ENCODE measurements at regions of chr1 and their contacts with region 1.

Region 1: GRCh38 chr1:47710329-47711071 is 272.7 kb downstream of the FOXD2 start:
- DNase-seq: peak; percentile 49 to 78
- H3K4me3 ChIP-seq: peak overlapping the region; percentile 32; the same call in 1 of the 2 replicates
- H3K27ac ChIP-seq: no peak overlapping the region
- H3K4me1 ChIP-seq: no peaks in the 10 kb centered on the region; the same call in 1 of the 2 replicates
- H3K27me3 ChIP-seq: peaks cover 33% of the 10 kb centered on the region
- CTCF ChIP-seq: peak; percentile 96

Region 2: GRCh38 chr1:47388891-47389238 is 321.6 kb before region 1 on chr1:
- CTCF ChIA-PET with region 1: interaction called, 3 read pairs
- POLR2A ChIA-PET with region 1: no interaction called
- intact Hi-C with region 1: loop called (anchors 1 kb)
- DNase-seq: peak; percentile 44 to 70
- H3K4me3 ChIP-seq: no peak overlapping the region
- H3K27ac ChIP-seq: no peak overlapping the region
- H3K4me1 ChIP-seq: peaks cover 9% of the 10 kb centered on the region; the same call in 1 of the 2 replicates
- H3K27me3 ChIP-seq: no peaks in the 10 kb centered on the region
- CTCF ChIP-seq: peak; percentile 88

Region 3: DNA sequence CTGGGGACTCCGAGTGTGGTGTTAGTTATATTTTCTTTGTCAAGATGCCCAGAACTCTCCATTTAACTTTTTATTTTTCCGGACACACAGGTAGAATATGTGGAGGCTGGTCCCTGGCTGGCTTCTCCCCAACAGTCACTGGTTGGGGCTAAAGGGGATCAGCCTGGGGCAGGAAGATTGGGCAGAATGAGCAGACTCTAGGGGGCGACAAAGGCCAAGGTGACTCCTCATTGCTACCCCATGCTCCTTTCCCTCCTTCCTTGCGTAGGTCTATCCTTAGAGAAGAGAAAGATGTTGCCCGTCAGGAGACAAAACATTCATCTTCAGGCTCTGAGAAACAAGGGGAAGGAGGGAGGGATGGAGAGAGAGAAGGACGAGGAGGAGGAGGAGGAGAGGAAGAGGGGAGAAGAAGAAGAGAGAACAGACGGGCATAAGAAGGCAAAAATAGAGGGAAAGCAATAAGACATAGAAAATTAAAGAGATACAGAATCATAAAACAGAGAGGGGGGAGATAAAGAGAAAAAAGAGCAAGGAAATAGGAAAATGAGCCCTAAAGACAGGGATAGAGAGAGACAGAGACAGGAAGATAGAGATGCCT is 182.7 kb before region 1 on chr1:
- CTCF ChIA-PET with region 1: no interaction called
- POLR2A ChIA-PET with region 1: no interaction called
- intact Hi-C with region 1: loop called (anchors 2 kb)
- DNase-seq: peak in 1 of 2 experiments; percentile 16
- H3K4me3 ChIP-seq: no peak overlapping the region
- H3K27ac ChIP-seq: no peak overlapping the region
- H3K4me1 ChIP-seq: no peaks in the 10 kb centered on the region
- H3K27me3 ChIP-seq: no peaks in the 10 kb centered on the region
- CTCF ChIP-seq: peak; percentile 74

Region 4: DNA sequence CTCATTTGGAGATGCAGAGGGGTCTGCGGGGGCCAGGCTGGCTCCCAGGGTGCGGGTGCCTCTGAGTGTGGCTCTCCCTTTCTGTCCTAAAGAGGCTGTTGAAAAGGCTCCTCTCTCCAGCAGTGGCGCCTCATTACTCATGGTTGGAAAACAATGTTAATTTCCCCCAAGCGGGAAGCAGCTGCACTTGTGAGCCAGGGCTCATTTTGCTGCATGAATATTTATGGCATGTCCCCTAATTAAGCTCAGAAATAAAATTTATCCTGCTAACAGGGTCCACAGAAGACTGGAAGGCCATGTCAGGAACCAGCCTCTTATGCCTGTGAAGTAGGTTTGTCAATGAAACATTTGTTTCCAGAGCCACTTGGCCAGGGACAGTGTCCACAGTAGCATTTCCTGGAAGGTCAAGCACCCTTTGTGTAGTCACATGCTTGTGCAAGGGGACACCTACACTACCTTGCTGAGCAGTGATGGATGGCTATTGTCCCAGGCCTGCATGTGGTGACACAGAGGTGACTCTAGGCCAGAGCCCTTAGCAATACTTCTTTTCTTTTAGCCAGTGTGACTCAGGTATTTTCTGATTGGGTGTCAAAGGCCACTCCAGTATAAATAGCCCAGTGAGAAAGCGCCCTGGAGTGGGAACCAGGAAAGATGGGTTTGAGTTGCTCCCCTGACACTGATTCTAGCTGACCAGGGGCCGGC is 13.6 kb before region 1 on chr1:
- CTCF ChIA-PET with region 1: no interaction called
- POLR2A ChIA-PET with region 1: no interaction called
- intact Hi-C with region 1: no loop called
- DNase-seq: peak; percentile 50 to 96
- H3K4me3 ChIP-seq: no peak overlapping the region
- H3K27ac ChIP-seq: peak overlapping the region; percentile 84
- H3K4me1 ChIP-seq: peaks cover 27% of the 10 kb centered on the region
- H3K27me3 ChIP-seq: no peaks in the 10 kb centered on the region
- CTCF ChIP-seq: no peak

Region 5: DNA sequence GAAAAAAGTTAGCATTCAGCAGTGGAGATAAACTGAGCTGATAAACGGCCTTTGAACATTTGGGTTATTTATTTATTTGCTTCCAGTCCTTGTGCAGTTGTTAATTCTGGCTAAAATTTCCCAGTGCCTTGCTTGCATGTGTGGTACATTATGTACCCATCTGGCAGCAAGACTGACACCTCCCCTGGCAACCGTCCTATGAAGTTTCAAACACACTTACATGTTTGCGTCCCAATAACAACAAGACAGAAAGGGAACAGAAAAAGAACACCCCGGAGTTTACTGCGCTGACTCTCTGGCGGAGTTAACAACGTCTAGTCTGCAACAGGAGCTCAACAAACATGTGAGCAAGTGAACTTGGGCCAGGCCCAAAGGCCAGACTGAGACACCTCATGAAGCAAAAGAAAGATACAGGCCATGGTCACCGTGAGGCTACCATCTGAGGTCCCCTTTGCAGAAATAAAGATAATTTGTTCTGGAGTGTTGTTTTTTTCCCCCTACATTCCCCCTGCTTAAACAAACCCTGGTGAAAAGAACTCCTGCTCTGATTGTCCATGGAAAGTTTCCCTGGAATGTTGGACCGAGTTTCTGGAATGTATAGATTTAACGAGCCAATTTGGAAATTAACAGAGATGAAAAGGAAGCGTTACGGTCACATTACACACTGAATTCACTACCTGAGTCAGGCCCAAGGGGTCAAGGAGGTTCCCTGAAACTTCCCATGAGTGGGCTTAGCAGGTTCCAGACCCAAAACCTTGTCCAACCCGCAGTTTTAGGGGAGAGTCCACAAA is 253.3 kb after region 1 on chr1:
- CTCF ChIA-PET with region 1: no interaction called
- POLR2A ChIA-PET with region 1: no interaction called
- intact Hi-C with region 1: no loop called
- DNase-seq: no peak
- H3K4me3 ChIP-seq: no peak overlapping the region
- H3K27ac ChIP-seq: no peak overlapping the region
- H3K4me1 ChIP-seq: no peaks in the 10 kb centered on the region
- H3K27me3 ChIP-seq: 0 out of 2 replicates have a peak, but pooled peaks cover 3% of the 10 kb centered on the region
- CTCF ChIP-seq: no peak

Measured in PC-9 (cell line).